Right ventricle myocardium superior (tissue), 1 donor: ENCODE measurements at regions of chr1 and their contacts with region 1.

Region 1: DNA sequence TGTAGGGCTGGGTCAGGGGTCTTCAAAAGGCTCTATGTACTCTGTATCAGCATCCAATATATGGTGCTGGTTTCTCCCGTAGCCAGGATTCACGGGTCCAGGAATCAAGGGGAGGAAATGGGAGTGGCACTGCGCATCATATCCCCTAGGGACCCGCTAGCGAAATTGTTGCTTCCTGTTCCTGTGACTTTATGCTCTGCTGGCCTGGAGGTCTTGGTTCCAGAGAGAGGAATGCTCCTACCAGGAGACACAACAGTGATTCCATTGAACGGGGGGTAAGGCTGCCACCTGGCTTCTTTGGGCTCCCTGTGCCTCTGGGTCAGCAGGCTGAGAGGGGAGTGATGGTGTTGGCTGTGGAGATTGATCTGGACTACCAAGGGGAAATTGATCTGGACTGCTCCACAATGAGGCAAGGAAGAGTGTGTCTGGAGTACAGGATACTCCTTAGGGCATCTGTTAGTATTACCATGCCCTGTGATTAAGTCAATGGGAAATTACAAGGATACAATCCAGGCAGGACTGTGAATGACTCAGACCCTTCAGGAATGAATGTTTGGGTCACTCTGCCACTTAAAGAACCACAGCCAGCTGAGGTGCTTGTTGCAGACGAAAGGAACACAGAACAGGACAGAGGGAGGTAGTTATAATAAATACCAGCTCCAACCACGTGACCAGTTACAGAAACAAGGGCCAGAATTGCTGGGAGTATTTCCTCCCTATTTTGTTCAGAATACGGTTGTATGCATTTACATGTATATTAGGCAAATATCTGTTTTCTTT is 10.2 kb downstream of the SPSB1 start:
- DNase-seq: no peak
- ATAC-seq: peak; percentile 50

Region 2: GRCh38 chr1:9362488-9362887 is 59.6 kb after region 1 on chr1:
- intact Hi-C with region 1: loop called (anchors 10 kb)
- DNase-seq: no peak
- ATAC-seq: no peak